HCT116 (cell line): ENCODE measurements at regions of chr9 and their contacts with region 1.

Region 1: GRCh38 chr9:111975709-111976108 is 79.1 kb downstream of the UGCG start:
- DNase-seq: peak; percentile 32
- ATAC-seq: peak; percentile 85
- H3K4me3 ChIP-seq: no peak overlapping the region
- H3K27ac ChIP-seq: no peak overlapping the region
- H3K4me1 ChIP-seq: peaks cover 0 to 24% of the 10 kb centered on the region in 2 experiments; a peak in 1 of 4 replicates
- H3K27me3 ChIP-seq: no peaks in the 10 kb centered on the region
- CTCF ChIP-seq: peak; percentile 9 to 31 (median 23); a peak in 4 of 6 replicates
- POLR2A ChIP-seq: no peak
- RAD21 ChIP-seq: peak; percentile 76

Region 2: GRCh38 chr9:112061152-112061740 is 85.5 kb after region 1 on chr9:
- CTCF ChIA-PET with region 1: no interaction called
- POLR2A ChIA-PET with region 1: no interaction called
- RAD21 ChIA-PET with region 1: interaction called in 1 of 2 experiments, 3 read pairs
- intact Hi-C with region 1: loop called (anchors 10 kb)
- DNase-seq: peak; percentile 61
- ATAC-seq: peak; percentile 42
- H3K4me3 ChIP-seq: no peak overlapping the region
- H3K27ac ChIP-seq: peak overlapping the region; percentile 70
- H3K4me1 ChIP-seq: peaks cover 33 to 58% of the 10 kb centered on the region in 2 experiments
- H3K27me3 ChIP-seq: no peaks in the 10 kb centered on the region
- CTCF ChIP-seq: no peak
- POLR2A ChIP-seq: no peak
- RAD21 ChIP-seq: peak; percentile 24; the same call in 1 of the 2 replicates